Activated CD4-positive, alpha-beta T cell treated with anti-CD3 and anti-CD28 coated beads for 36 hours (primary cell): ENCODE measurements at regions of chr12 and their contacts with region 1.

Region 1: DNA sequence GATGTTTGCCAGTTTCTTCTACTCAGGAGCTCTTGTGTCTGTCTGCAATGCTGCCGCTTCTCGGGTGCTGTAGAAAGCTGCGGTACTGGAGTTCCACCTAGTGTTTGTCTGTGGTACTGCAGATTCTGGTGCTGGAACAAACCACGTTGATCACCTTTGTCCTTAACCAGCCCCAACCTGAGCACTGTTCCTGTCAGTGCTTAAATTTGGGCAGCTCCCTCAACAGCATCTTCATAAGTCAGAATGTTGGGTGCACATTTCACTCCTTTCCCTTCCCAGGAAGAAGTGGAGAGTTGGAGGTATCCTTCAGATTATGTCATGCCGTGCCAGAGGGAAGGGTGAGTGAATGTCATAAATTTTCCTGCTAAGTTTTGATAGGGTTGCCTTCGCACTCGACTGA is 48.7 kb upstream of the LALBA start:
- DNase-seq: peak; percentile 85
- ATAC-seq: peak; percentile 89
- H3K4me3 Mint-ChIP-seq: no peak overlapping the region
- H3K27ac Mint-ChIP-seq: no peak overlapping the region
- H3K4me1 Mint-ChIP-seq: no peaks in the 10 kb centered on the region
- H3K27me3 Mint-ChIP-seq: peaks cover 30% of the 10 kb centered on the region

Region 2: GRCh38 chr12:48189331-48190125 is 429.0 kb before region 1 on chr12:
- CTCF ChIA-PET with region 1: interaction called, 9 read pairs
- POLR2A ChIA-PET with region 1: no interaction called
- intact Hi-C with region 1: loop called in 1 of 2 experiments (anchors 2 kb)
- DNase-seq: peak; percentile 79
- ATAC-seq: peak; percentile 81
- H3K4me3 Mint-ChIP-seq: no peak overlapping the region
- H3K27ac Mint-ChIP-seq: no peak overlapping the region
- H3K4me1 Mint-ChIP-seq: peaks cover 6% of the 10 kb centered on the region
- H3K27me3 Mint-ChIP-seq: peaks cover 26% of the 10 kb centered on the region

Region 3: DNA sequence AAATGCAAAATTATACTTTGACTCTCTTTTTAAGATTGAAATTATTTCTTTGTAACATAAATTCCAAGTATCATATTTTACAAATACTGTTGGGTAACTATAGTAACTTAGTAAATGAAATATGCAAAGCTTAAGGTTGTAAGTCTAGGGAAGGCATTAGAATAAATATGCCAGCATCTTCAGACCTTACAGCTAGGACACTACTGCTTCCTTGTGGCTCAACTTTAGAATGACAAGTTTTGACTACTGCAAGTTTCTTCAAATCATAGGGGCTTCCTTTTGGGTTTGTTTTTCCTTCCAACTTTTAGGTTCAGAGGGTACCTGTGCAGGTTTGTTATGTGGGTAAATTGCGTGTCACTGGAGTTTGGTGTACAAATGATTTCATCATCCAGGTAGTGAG is 163.9 kb before region 1 on chr12:
- CTCF ChIA-PET with region 1: interaction called, 12 read pairs
- POLR2A ChIA-PET with region 1: interaction called, 3 read pairs
- intact Hi-C with region 1: no loop called
- DNase-seq: no peak
- ATAC-seq: no peak
- H3K4me3 Mint-ChIP-seq: no peak overlapping the region
- H3K27ac Mint-ChIP-seq: no peak overlapping the region
- H3K4me1 Mint-ChIP-seq: no peaks in the 10 kb centered on the region
- H3K27me3 Mint-ChIP-seq: peaks cover 8% of the 10 kb centered on the region

Region 4: DNA sequence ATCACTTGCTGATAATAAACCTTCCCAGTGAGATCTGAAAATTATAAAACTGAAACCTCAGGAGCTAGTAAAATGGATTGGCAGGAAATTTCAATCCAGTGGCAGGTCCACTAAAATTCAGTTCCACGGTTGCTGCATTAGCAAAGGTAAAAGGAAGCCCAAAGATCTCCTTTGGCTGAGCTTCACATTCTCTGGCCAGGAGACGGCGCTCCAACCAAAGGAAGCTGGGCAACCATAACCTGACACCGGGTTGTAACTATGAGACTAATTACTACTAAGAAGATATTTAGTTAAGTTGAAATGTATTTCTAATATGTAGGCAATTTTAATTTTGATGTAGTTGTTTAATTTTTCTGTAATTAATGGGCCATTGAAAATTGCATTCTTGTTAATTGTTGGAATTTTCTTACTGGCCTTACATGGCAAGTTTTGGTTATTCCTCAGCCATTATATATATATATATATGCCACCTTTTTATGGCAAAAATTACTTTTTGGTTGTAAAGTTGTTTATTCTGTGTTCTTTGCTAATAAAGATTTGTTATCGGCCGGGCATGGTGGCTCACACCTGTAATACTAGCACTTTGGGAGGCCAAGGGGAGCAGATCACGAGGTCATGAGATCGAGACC is 76.1 kb before region 1 on chr12:
- CTCF ChIA-PET with region 1: interaction called, 134 read pairs
- POLR2A ChIA-PET with region 1: no interaction called
- intact Hi-C with region 1: loop called (anchors 1 kb)
- DNase-seq: peak; percentile 80
- ATAC-seq: peak; percentile 55
- H3K4me3 Mint-ChIP-seq: no peak overlapping the region
- H3K27ac Mint-ChIP-seq: no peak overlapping the region
- H3K4me1 Mint-ChIP-seq: peaks cover 11% of the 10 kb centered on the region
- H3K27me3 Mint-ChIP-seq: no peaks in the 10 kb centered on the region